Naive thymus-derived CD4-positive, alpha-beta T cell (primary cell): ENCODE measurements at regions of chr1 and their contacts with region 1.

Region 1: DNA sequence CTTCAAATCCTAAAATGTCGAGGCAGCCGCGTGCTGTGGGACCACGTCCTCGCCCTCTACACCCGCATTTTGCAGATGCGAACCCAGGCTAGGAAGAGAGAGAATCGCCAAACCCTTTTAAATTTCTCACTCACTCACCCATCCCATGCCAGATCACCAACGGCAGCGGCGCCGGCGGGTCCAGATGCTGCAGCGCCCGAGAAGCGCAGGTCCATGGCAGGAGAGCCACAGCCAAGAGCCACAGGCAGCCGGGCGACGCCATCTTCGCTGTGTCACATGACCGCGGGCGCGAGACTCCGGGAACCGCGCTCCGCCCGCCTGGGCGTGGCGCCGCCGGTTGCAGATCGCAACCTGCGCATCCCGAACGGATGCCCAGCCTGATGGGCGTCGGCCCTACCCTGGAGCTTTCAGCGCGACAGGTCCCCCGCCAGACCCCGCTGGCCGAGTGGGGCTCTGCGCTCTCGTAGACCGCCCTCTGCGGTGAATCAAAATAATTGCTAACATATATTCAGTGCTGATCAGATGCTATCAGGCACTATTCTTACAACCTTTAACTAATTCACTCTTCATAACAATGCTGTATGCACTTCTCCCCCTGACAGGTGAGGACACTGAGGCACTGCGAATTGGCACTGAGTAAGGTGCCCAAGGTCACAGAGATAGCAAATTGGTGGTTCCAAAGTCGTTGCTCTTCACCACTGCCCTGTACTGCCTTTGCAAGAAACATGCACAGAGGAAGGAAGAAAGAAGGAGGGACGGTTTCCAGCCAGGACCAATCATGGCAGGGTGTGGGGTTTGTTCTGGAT is at the start of gene PPT1:
- DNase-seq: peak; percentile 52 to 83 (median 77)
- ATAC-seq: peak; percentile 92
- H3K4me3 ChIP-seq: peak within 1 kb of the TSS; percentile 93
- H3K4me3 Mint-ChIP-seq: peak within 1 kb of the TSS; percentile 86 to 97 (median 94)
- H3K27ac ChIP-seq: peak within 1 kb of the TSS; percentile 71
- H3K27ac Mint-ChIP-seq: peak within 1 kb of the TSS; percentile 90 to 97 (median 94)
- H3K4me1 ChIP-seq: peaks cover 13 to 14% of the 10 kb centered on the region in 2 donors
- H3K4me1 Mint-ChIP-seq: peaks cover 26 to 47% (median 34%) of the 10 kb centered on the region in 7 donors
- H3K27me3 ChIP-seq: no peaks in the 10 kb centered on the region
- H3K27me3 Mint-ChIP-seq: peaks cover 0 to 18% (median 3%) of the 10 kb centered on the region in 5 donors
- total RNA-seq, gene PPT1: 51.8 to 114 (median 62.6) TPM

Region 2: DNA sequence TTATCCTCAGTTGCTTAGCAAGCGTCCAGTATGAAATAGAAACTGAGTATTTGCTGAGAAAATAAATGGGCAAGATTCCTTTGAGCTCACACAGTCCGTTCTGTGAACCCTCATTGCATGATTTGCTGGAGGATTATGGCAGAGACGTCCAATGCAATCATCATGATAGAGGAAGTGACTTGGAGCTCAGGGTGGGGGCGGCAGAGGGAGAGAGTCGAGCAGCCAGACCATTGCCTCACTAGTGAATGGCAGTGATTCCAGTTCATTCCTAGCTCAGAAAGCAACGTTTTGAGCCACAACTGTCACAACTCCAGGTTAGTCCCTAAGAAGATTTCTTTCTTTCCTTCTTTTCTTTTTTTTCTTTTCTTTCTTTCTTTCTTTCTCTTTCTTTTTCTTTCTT is 247.4 kb after region 1 on chr1:
- CTCF ChIA-PET with region 1: interaction called, 3 read pairs
- POLR2A ChIA-PET with region 1: no interaction called
- intact Hi-C with region 1: loop called in 1 of 2 experiments (anchors 5 kb)
- DNase-seq: peak in 6 of 9 donors; percentile 25 to 35 (median 30)
- ATAC-seq: peak; percentile 86
- H3K4me3 ChIP-seq: peak overlapping the region; percentile 3
- H3K4me3 Mint-ChIP-seq: peak overlapping the region; percentile 53 to 86 (median 72)
- H3K27ac ChIP-seq: peak overlapping the region; percentile 40
- H3K27ac Mint-ChIP-seq: peak overlapping the region; percentile 34 to 91 (median 84)
- H3K4me1 ChIP-seq: peaks cover 6 to 40% of the 10 kb centered on the region in 2 donors
- H3K4me1 Mint-ChIP-seq: peaks cover 41 to 58% (median 55%) of the 10 kb centered on the region in 7 donors
- H3K27me3 ChIP-seq: no peaks in the 10 kb centered on the region
- H3K27me3 Mint-ChIP-seq: no peaks in the 10 kb centered on the region